ENCODE measurements at regions of chr21 and their contacts with region 1.

Region 1: DNA sequence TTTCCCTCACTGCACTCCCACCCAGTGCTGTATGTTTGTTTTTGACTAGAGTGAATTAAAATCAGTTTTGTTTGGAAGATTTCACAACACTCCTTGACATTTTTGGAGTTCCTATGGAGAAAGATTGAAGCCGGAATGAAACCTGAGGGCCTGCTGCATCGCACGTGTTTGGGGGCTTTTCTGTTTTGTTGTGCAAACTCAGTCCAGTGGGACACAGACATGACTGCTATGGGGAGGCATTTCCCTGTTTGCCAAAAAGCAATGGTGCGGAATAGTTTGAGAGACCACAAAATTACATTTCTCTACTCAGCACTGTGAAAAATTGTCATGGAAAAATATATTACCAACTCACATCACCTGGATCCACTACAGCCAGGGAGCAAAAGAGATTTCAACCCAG is 43.8 kb upstream of the KCNE2 start:
- DNase-seq: no peak

Region 2: GRCh38 chr21:33915368-33916199 is 404.4 kb before region 1 on chr21 and contains the start of gene ATP5PO:
- intact Hi-C with region 1: no loop called
- DNase-seq: peak; percentile 100
- total RNA-seq, gene ATP5PO: 138 to 167 TPM

Region 3: DNA sequence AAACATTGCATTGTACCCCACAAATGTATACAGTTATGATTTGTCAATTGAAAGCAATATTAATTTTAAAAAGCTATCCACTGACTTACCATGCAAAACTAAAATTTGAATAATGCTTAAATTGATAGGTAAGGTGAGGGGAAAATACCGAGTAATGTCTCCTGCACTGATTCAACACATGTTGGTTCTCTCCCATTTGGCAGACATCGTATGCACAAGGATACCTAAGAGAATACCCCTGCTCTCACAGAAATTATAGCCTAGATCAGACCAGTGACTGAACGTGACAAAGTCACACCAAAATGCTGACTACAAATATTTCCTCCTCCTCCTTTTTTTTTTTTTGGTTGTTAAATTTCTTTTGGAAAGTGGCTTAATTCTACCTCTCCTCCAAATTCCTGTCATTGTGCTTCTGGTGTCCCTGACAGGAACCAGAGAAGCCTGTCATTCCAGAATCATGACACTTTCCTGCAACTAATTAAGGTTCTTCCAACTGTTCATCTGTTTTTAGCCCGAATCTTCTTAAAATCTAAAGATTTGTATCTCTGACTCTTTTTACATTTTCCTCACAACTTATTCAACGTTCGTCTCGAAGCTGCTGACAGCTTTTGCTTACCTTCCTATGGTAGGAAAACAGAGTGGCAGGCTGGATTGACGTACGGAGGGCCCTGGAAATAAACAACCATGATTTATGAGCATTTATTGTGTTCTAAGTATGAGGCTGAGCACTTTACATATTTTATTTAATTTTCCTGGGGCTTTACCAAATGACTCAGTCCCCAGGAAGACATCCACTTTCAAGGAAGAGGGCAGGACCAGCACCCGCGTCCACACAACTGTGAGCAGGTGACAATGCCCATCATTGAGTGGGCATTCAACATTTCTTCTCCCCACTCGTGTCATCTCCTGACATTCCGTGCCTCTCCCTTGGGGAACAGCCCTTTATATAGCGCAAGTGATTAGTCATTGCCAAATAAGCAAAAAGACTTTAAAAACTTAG is 14.1 kb before region 1 on chr21:
- intact Hi-C with region 1: loop called in 1 of 2 experiments (anchors 1 kb)
- DNase-seq: no peak

Region 4: GRCh38 chr21:34545079-34545884 is 225.3 kb after region 1 on chr21:
- intact Hi-C with region 1: no loop called
- DNase-seq: no peak